HCT116 (cell line): ENCODE measurements at regions of chr3 and their contacts with region 1.

Region 1: DNA sequence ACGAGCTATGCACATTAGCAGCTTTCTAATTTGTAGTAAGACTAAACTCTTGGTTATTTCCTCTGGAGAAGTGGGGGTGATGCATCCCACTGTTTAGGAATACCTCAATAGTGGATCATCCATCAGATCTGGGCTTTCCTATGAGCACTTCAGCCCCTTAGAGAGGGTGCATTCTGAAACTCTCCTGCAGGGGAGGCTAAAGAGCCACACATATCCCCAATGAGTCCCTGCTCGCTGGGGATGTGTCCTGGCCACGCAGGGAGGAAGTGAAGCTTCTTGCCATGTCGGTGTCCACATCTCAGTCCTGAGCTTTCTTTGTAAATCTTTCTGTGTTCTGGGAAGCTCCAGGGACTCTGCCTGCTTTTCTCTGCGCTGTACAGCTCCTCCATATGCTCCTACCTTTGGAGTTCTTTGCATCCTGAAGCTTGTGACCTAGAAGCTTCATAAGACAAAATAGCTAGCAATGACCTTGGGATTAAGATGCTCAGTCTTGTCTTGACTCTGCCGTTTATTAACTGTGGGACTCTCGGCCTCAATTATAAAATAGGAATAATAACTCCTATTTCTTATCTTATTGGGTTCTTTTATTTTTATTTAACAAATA is 28.3 kb upstream of the MASP1 start:
- DNase-seq: peak; percentile 65
- ATAC-seq: peak; percentile 92
- H3K4me3 ChIP-seq: peak overlapping the region in 1 of 2 experiments; percentile 32; a peak in 3 of 4 replicates
- H3K27ac ChIP-seq: no peak overlapping the region
- H3K4me1 ChIP-seq: peaks cover 0 to 11% of the 10 kb centered on the region in 2 experiments; a peak in 1 of 4 replicates
- H3K27me3 ChIP-seq: peaks cover 33% of the 10 kb centered on the region
- CTCF ChIP-seq: peak; percentile 84 to 92 (median 88)
- POLR2A ChIP-seq: no peak
- RAD21 ChIP-seq: peak; percentile 94

Region 2: DNA sequence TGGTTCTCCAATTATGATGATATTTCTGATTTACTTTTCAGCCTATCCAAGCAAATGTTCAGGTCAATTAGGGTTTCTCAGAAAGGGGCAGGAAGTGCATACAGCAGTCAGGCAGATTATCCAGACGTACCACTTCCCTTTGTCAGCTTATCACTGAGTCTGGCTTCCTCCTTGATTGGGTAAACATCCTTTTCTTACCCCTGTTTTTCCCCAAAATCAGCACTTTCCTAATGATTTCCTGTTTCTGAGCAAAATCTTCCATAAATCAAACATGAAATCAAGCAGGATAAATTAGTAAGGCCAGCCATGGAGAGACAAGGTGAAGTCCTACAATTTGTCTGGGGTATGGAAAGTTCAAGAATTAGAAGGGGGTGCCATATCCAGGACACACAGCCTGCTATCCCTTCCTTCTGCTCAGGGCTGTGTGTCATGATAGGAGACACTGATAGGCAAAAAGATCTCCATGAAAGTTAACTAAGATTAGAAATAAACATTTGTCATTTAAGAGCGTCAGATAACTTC is 448.3 kb before region 1 on chr3:
- CTCF ChIA-PET with region 1: no interaction called
- POLR2A ChIA-PET with region 1: no interaction called
- RAD21 ChIA-PET with region 1: no interaction called
- intact Hi-C with region 1: no loop called
- DNase-seq: no peak
- ATAC-seq: no peak
- H3K4me3 ChIP-seq: no peak overlapping the region
- H3K27ac ChIP-seq: no peak overlapping the region
- H3K4me1 ChIP-seq: no peaks in the 10 kb centered on the region
- H3K27me3 ChIP-seq: no peaks in the 10 kb centered on the region
- CTCF ChIP-seq: no peak
- POLR2A ChIP-seq: no peak
- RAD21 ChIP-seq: no peak

Region 3: GRCh38 chr3:187112934-187113793 is 206.6 kb before region 1 on chr3:
- CTCF ChIA-PET with region 1: interaction called, 6 read pairs
- POLR2A ChIA-PET with region 1: no interaction called
- RAD21 ChIA-PET with region 1: interaction called in 1 of 2 experiments, 3 read pairs
- intact Hi-C with region 1: loop called (anchors 10 kb)
- DNase-seq: peak; percentile 18
- ATAC-seq: peak; percentile 87
- H3K4me3 ChIP-seq: no peak overlapping the region
- H3K27ac ChIP-seq: no peak overlapping the region
- H3K4me1 ChIP-seq: no peaks in the 10 kb centered on the region
- H3K27me3 ChIP-seq: 0 out of 2 replicates have a peak, but pooled peaks cover 6% of the 10 kb centered on the region
- CTCF ChIP-seq: peak; percentile 36 to 76 (median 64)
- POLR2A ChIP-seq: no peak
- RAD21 ChIP-seq: peak; percentile 75

Region 4: DNA sequence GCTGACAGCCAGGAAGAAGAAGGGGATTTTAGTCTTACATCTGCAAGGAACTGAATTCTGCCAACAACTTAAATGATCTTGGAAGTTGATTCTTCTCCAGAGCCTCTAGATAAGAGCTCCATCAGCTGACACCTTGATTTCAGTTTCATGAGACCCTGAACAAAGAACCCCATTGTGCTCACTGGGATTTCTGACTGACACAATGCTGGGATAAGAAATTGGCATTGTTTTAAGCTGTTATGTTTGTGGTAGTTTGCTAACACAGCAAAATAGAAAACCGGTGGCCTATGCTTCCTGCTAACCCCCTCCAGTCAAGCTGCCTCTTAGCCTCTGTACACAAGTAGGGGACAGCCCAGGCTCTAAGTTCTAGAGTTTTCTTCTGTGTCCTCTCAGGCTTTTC is 64.5 kb before region 1 on chr3:
- CTCF ChIA-PET with region 1: no interaction called
- POLR2A ChIA-PET with region 1: no interaction called
- RAD21 ChIA-PET with region 1: no interaction called
- intact Hi-C with region 1: no loop called
- DNase-seq: no peak
- ATAC-seq: no peak
- H3K4me3 ChIP-seq: no peak overlapping the region
- H3K27ac ChIP-seq: no peak overlapping the region
- H3K4me1 ChIP-seq: no peaks in the 10 kb centered on the region
- H3K27me3 ChIP-seq: 0 out of 2 replicates have a peak, but pooled peaks cover 6% of the 10 kb centered on the region
- CTCF ChIP-seq: no peak
- POLR2A ChIP-seq: no peak
- RAD21 ChIP-seq: no peak

Region 5: DNA sequence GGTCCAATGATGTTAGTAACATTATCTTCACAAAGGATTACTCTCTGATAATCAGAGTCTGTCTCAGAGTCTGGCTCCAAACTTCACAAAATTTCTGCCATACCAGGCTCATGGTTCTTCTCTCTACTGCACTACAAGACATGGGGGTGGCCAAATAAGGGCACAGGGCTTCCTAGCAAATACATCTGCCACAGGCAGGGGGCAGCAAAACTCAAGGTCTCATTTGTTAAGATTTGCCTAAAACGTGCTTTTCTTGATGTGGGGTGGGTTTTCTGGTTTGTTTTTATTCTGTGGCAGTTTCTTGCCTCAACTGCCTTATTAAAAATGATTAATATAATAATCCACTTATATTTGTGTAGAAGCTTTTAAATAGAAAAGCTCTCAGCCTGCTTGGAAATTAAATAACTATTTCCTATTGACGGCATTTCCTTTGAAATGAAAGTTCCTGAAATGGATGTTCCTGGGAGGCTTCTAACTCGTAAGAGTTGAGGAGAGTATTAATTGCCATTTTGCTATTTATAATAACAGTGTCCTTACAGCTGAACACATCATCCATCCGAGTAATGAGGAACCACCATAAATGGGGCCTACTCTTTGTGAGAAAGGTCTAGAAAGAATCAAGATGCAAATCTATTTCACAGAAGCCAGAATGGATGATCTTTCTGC is 296.6 kb after region 1 on chr3:
- CTCF ChIA-PET with region 1: interaction called, 22 read pairs
- POLR2A ChIA-PET with region 1: no interaction called
- RAD21 ChIA-PET with region 1: no interaction called
- intact Hi-C with region 1: loop called (anchors 2 kb)
- DNase-seq: peak; percentile 46
- ATAC-seq: peak; percentile 91
- H3K4me3 ChIP-seq: no peak overlapping the region
- H3K27ac ChIP-seq: no peak overlapping the region
- H3K4me1 ChIP-seq: no peaks in the 10 kb centered on the region
- H3K27me3 ChIP-seq: peaks cover 24% of the 10 kb centered on the region
- CTCF ChIP-seq: peak; percentile 70 to 82 (median 80); a peak in 5 of 6 replicates
- POLR2A ChIP-seq: no peak
- RAD21 ChIP-seq: peak; percentile 68

Region 6: DNA sequence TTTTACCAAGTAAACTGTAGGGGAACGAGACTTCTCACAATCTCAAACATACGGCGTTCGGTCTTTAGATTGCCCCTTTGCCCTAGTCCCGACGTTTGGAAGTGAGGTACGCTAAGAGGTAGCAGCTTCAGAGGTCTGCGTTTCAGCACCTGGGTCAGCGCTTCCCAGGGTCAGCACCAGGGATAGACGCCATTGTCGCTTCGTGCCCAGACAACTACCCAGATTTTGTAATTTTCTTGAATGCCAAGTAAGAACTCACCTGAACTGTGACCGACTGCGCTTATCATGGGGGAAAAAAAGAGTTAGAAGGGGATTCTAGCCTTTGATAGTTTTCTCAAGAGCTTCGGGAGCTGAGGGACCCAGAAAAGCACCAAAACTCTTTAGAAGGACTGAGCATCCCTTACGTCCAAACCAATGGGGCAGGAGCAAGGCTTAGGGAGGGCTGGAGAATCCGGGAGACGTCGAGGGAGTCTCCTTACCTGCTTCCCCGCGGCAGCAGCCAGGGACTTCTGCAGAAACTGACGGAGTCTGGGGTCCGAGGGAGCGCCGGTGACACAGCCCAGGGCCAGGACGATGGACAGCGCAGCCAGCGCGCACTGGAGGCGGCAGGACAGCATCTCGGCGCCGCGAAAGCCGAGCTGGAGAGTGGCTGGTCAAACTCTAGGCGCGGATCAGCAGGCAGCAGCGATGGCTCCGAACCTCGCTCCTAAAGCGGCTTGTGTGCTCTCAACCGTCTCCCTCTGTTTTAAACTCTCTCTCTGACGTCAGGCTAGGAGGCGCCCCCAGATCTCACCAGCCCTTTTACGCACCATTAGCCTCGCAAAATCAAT is 350.1 kb after region 1 on chr3 and contains the start of gene SST:
- CTCF ChIA-PET with region 1: interaction called, 472 read pairs
- POLR2A ChIA-PET with region 1: no interaction called
- RAD21 ChIA-PET with region 1: no interaction called
- intact Hi-C with region 1: no loop called
- DNase-seq: no peak
- ATAC-seq: no peak
- H3K4me3 ChIP-seq: no peak within 1 kb of the TSS
- H3K27ac ChIP-seq: no peak within 1 kb of the TSS
- H3K4me1 ChIP-seq: no peaks in the 10 kb centered on the region
- H3K27me3 ChIP-seq: peaks cover 91% of the 10 kb centered on the region
- CTCF ChIP-seq: no peak
- POLR2A ChIP-seq: no peak
- RAD21 ChIP-seq: no peak
- total RNA-seq, gene SST: not detected

Region 7: DNA sequence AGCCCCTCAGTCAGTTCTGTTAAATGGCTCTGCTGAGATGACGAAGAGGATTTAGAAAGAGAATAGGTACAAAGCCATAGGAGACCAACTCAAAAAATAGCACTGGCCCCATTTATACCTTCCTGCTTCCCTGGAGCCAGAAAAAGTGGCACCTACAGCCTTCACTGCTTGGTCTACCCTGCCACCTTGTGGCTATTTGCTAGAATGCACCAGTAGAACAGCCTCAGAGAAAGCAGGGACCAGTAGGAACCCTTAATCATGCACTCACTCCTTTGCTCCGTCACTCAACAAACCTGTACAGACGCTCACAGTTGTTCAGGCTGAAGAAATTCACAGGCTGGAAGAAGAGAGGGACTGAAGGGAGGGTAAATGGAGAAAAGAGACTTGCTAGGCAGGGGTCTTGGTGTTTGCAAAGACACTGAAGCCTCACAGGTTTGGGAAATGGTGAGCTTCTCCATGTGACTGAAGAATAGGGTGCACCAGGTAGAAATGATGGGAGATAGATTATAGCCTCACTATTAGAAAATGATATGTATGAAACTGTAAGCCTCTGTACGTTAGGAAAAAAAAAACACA is 394.7 kb after region 1 on chr3:
- CTCF ChIA-PET with region 1: interaction called, 29 read pairs
- POLR2A ChIA-PET with region 1: no interaction called
- RAD21 ChIA-PET with region 1: interaction called in 1 of 2 experiments, 6 read pairs
- intact Hi-C with region 1: loop called (anchors 1 kb)
- DNase-seq: peak; percentile 72
- ATAC-seq: peak; percentile 96
- H3K4me3 ChIP-seq: no peak overlapping the region
- H3K27ac ChIP-seq: no peak overlapping the region
- H3K4me1 ChIP-seq: peaks cover 3% of the 10 kb centered on the region in 2 experiments; a peak in 2 of 4 replicates
- H3K27me3 ChIP-seq: no peaks in the 10 kb centered on the region
- CTCF ChIP-seq: peak; percentile 85 to 95 (median 93)
- POLR2A ChIP-seq: no peak
- RAD21 ChIP-seq: peak; percentile 97